ENCODE measurements at regions of chr19 and their contacts with region 1.

Region 1: GRCh38 chr19:55160128-55160985 is 2.8 kb upstream of the TNNI3 start:
- DNase-seq: peak; percentile 97
- CTCF ChIP-seq: peak; percentile 94

Region 2: DNA sequence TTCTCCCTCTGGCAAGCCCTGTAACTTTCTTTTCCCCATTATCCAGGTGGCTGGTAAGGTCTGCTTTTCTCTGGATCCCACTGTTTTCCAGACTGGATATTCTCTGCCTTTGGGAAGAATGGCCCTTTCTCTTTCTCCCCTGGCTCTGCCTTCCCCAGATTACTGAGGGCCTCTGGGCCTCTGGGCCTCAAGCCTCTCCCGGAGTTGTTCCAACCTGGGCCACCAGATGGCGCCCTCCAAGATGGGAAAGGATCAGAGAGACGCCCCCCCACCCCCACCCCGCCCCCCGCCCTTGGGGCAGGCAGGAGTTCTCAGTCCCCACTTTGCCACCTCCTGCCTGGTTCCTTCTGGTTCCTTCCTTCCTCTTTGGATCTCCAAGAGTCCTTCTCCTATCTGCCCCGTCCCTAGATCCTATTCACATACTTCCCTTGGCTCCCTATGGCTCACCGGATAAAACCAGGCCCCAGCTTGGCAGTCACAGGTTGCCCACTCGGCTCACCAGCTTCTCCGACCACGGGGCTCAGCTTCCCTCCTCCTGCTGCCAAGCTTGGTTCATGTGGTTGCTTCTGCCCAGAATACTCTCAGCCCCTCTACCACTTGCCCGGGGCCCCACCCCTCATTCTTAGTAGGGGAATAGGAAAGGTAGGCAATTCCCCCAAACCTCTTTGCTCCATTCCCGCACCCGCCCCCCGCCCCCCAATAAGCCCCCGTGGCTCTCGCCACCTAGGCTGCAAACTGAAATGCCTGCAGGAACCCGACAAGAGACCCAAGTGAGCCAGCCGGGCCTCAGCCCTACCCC is 71.6 kb before region 1 on chr19:
- CTCF ChIA-PET with region 1: interaction called, 17 read pairs
- POLR2A ChIA-PET with region 1: no interaction called
- DNase-seq: peak; percentile 81
- CTCF ChIP-seq: peak; percentile 66

Region 3: GRCh38 chr19:55132453-55133129 is 27.8 kb before region 1 on chr19:
- CTCF ChIA-PET with region 1: interaction called, 12 read pairs
- POLR2A ChIA-PET with region 1: no interaction called
- DNase-seq: peak; percentile 35
- CTCF ChIP-seq: no peak

Region 4: DNA sequence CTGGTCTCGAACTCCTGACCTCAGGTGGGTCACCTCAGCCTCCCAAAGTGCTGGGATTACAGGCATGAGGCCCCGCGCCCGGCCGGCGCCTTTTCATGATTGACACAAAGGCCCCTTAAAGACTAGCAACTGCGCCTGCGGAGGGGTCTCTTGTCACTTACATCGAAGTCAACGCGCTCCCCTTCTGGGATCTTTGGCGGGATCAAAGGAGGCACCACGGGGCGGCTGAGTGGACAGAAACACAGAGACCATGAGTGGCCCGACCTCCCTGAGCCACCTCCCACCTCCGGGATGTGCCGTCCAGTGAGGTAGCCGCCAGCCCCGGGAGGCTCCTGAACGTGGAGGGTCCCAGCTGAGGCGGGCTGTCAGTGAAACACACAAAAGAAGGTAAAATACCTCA is 18.7 kb before region 1 on chr19:
- CTCF ChIA-PET with region 1: interaction called, 16 read pairs
- POLR2A ChIA-PET with region 1: no interaction called
- DNase-seq: no peak
- CTCF ChIP-seq: no peak

Region 5: GRCh38 chr19:55146705-55147273 is 13.6 kb before region 1 on chr19:
- CTCF ChIA-PET with region 1: interaction called, 16 read pairs
- POLR2A ChIA-PET with region 1: no interaction called
- DNase-seq: peak; percentile 31
- CTCF ChIP-seq: no peak

Region 6: GRCh38 chr19:55173714-55174409 is 13.5 kb after region 1 on chr19:
- CTCF ChIA-PET with region 1: interaction called, 18 read pairs
- POLR2A ChIA-PET with region 1: no interaction called
- DNase-seq: peak; percentile 51
- CTCF ChIP-seq: no peak

Region 7: DNA sequence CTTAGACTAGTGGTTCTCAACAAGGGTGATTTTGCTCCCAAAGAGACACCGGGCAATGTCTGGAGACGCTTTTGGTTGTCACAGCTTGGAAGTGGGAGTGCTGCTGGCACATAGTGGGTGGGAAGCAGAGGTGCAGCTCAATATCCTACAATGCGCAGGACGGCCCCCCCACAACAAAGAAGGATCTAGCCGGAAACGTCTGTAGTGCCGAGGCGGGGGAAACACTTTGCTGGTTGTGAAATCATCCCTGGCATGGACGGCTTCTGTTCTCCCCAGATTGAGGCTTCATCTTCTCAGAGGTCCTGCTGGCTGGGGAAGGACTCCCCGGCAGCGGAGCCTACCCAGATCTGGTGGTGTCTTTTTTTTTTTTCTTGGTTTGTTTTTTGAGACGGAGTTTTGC is 33.1 kb after region 1 on chr19:
- CTCF ChIA-PET with region 1: interaction called, 10 read pairs
- POLR2A ChIA-PET with region 1: no interaction called
- DNase-seq: no peak
- CTCF ChIP-seq: no peak

Measured in GM10248 (cell line).